A673 (cell line): ENCODE measurements at regions of chr6 and their contacts with region 1.

Region 1: GRCh38 chr6:107964671-107965340 is 6.8 kb upstream of the SEC63 start:
- DNase-seq: no peak
- H3K4me3 ChIP-seq: no peak overlapping the region
- H3K27ac ChIP-seq: no peak overlapping the region
- H3K4me1 ChIP-seq: no peaks in the 10 kb centered on the region
- H3K27me3 ChIP-seq: no peaks in the 10 kb centered on the region
- CTCF ChIP-seq: no peak

Region 2: GRCh38 chr6:107396211-107396610 is 568.6 kb before region 1 on chr6:
- CTCF ChIA-PET with region 1: no interaction called
- POLR2A ChIA-PET with region 1: no interaction called
- intact Hi-C with region 1: no loop called
- DNase-seq: no peak
- H3K4me3 ChIP-seq: no peak overlapping the region
- H3K27ac ChIP-seq: no peak overlapping the region
- H3K4me1 ChIP-seq: no peaks in the 10 kb centered on the region
- H3K27me3 ChIP-seq: no peaks in the 10 kb centered on the region
- CTCF ChIP-seq: no peak

Region 3: GRCh38 chr6:107917451-107918375 is 47.1 kb before region 1 on chr6:
- CTCF ChIA-PET with region 1: interaction called, 11 read pairs
- POLR2A ChIA-PET with region 1: no interaction called
- intact Hi-C with region 1: no loop called
- DNase-seq: no peak
- H3K4me3 ChIP-seq: no peak overlapping the region
- H3K27ac ChIP-seq: no peak overlapping the region
- H3K4me1 ChIP-seq: no peaks in the 10 kb centered on the region
- H3K27me3 ChIP-seq: no peaks in the 10 kb centered on the region
- CTCF ChIP-seq: no peak